ENCODE measurements at regions of chr12 and their contacts with region 1.

Region 1: GRCh38 chr12:78181544-78182162 is 351.0 kb downstream of the NAV3 start:
- DNase-seq: peak; percentile 73
- ATAC-seq: peak; percentile 62
- H3K4me3 ChIP-seq: no peak overlapping the region
- H3K27ac ChIP-seq: no peak overlapping the region
- H3K4me1 ChIP-seq: peaks cover 30% of the 10 kb centered on the region
- H3K27me3 ChIP-seq: no peaks in the 10 kb centered on the region
- CTCF ChIP-seq: peak; percentile 89

Region 2: GRCh38 chr12:78229591-78230101 is 48.0 kb after region 1 on chr12:
- CTCF ChIA-PET with region 1: no interaction called
- POLR2A ChIA-PET with region 1: no interaction called
- intact Hi-C with region 1: no loop called
- DNase-seq: peak; percentile 83
- ATAC-seq: peak; percentile 29; the same call in 1 of the 2 replicates
- H3K4me3 ChIP-seq: no peak overlapping the region
- H3K27ac ChIP-seq: no peak overlapping the region
- H3K4me1 ChIP-seq: no peaks in the 10 kb centered on the region
- H3K27me3 ChIP-seq: no peaks in the 10 kb centered on the region
- CTCF ChIP-seq: peak; percentile 84

Region 3: DNA sequence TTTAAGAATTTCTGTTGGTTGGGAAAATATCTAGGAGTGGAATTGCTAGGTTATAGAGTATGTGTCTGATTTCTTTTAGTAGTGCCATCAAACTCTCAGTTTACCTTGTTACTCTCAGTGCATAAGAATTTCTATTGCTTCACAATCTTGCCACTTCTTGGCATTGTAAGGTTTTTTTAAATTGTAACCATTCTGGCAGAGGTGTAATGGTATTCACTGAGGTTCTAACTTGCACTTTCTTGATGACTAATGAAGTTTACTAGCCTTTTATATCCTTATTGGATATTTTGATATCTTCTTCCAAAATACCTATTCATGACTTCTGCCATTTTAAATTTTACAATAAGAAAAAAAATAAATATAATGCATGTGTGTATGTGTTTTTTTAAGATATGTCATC is 127.0 kb after region 1 on chr12:
- CTCF ChIA-PET with region 1: no interaction called
- POLR2A ChIA-PET with region 1: no interaction called
- intact Hi-C with region 1: loop called (anchors 1 kb)
- DNase-seq: peak; percentile 45
- ATAC-seq: peak; percentile 50
- H3K4me3 ChIP-seq: no peak overlapping the region
- H3K27ac ChIP-seq: no peak overlapping the region
- H3K4me1 ChIP-seq: peaks cover 30% of the 10 kb centered on the region
- H3K27me3 ChIP-seq: no peaks in the 10 kb centered on the region
- CTCF ChIP-seq: no peak

Region 4: GRCh38 chr12:78398750-78399149 is 217.1 kb after region 1 on chr12:
- CTCF ChIA-PET with region 1: no interaction called
- POLR2A ChIA-PET with region 1: no interaction called
- intact Hi-C with region 1: loop called (anchors 1 kb)
- DNase-seq: peak; percentile 85
- ATAC-seq: peak; percentile 79
- H3K4me3 ChIP-seq: no peak overlapping the region
- H3K27ac ChIP-seq: peak overlapping the region; percentile 92
- H3K4me1 ChIP-seq: peaks cover 30% of the 10 kb centered on the region
- H3K27me3 ChIP-seq: no peaks in the 10 kb centered on the region
- CTCF ChIP-seq: no peak

Region 5: DNA sequence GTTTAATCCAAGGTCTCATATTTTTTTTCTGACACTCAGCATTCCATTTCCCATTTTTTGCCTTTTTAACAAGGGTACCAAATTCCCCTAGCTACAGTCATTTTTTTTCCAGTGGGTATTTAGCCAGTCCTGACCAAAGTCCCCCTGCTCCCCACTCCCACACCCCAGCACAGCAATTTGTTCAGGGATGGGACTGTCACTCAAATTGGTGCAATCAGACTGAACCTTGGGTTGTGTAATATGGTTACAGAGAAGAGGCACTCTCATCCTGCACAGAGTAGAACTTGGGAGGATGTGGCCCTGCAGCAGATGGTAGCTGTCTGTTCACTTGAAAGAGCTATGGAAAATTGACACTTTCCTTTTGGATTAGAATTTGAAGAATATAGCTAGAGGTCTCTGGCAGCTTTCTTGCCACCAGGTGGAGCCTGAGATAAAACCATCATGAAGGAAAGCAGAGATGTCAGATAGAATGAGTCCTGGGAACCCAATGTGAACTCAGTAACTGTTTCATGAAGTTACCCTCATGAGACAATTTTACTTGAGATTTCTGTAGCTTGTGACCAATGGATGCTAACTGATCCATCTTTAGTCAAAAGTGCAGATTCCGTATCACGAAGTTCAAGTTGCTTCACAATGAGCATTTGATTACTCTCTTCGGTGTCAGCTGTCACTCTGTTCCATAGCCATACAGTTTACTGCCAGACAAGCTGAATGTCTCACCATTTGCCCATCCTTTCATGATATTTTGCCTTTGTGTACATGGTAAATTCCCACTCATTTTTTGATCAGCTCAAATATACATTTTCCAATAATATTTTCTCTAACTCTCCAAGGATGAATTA is 288.9 kb after region 1 on chr12:
- CTCF ChIA-PET with region 1: no interaction called
- POLR2A ChIA-PET with region 1: no interaction called
- intact Hi-C with region 1: loop called (anchors 2 kb)
- DNase-seq: peak; percentile 64
- ATAC-seq: peak; percentile 80
- H3K4me3 ChIP-seq: no peak overlapping the region
- H3K27ac ChIP-seq: no peak overlapping the region
- H3K4me1 ChIP-seq: no peaks in the 10 kb centered on the region
- H3K27me3 ChIP-seq: no peaks in the 10 kb centered on the region
- CTCF ChIP-seq: peak; percentile 81

Region 6: GRCh38 chr12:78703820-78704525 is 522.3 kb after region 1 on chr12:
- CTCF ChIA-PET with region 1: no interaction called
- POLR2A ChIA-PET with region 1: no interaction called
- intact Hi-C with region 1: loop called (anchors 2 kb)
- DNase-seq: peak; percentile 92
- ATAC-seq: peak; percentile 96
- H3K4me3 ChIP-seq: peak overlapping the region; percentile 7; the same call in 1 of the 2 replicates
- H3K27ac ChIP-seq: peak overlapping the region; percentile 88
- H3K4me1 ChIP-seq: peaks cover 38% of the 10 kb centered on the region
- H3K27me3 ChIP-seq: no peaks in the 10 kb centered on the region
- CTCF ChIP-seq: no peak

Region 7: GRCh38 chr12:79006306-79006705 is 824.7 kb after region 1 on chr12:
- CTCF ChIA-PET with region 1: no interaction called
- POLR2A ChIA-PET with region 1: no interaction called
- intact Hi-C with region 1: loop called (anchors 2 kb)
- DNase-seq: peak; percentile 52
- ATAC-seq: peak; percentile 46
- H3K4me3 ChIP-seq: no peak overlapping the region
- H3K27ac ChIP-seq: no peak overlapping the region
- H3K4me1 ChIP-seq: no peaks in the 10 kb centered on the region
- H3K27me3 ChIP-seq: no peaks in the 10 kb centered on the region
- CTCF ChIP-seq: peak; percentile 69

Region 8: GRCh38 chr12:79344855-79345847 is 1163.5 kb after region 1 on chr12:
- CTCF ChIA-PET with region 1: interaction called, 3 read pairs
- POLR2A ChIA-PET with region 1: no interaction called
- intact Hi-C with region 1: loop called (anchors 1 kb)
- DNase-seq: peak; percentile 77
- ATAC-seq: peak; percentile 99
- H3K4me3 ChIP-seq: no peak overlapping the region
- H3K27ac ChIP-seq: no peak overlapping the region
- H3K4me1 ChIP-seq: no peaks in the 10 kb centered on the region
- H3K27me3 ChIP-seq: peaks cover 4% of the 10 kb centered on the region; the same call in 1 of the 2 replicates
- CTCF ChIP-seq: peak; percentile 91